ENCODE measurements at regions of chr6 and their contacts with region 1.

Region 1: GRCh38 chr6:42260972-42261371 is 43.3 kb upstream of the MRPS10 start:
- DNase-seq: peak in 1 of 2 experiments; percentile 86
- H3K4me3 ChIP-seq: no peak overlapping the region
- H3K27ac ChIP-seq: no peak overlapping the region
- H3K4me1 ChIP-seq: peaks cover 17 to 26% (median 20%) of the 10 kb centered on the region in 4 experiments
- H3K27me3 ChIP-seq: no peaks in the 10 kb centered on the region
- CTCF ChIP-seq: peak; percentile 51 to 79 (median 78)
- EP300 ChIP-seq: no peak
- POLR2A ChIP-seq: no peak
- RAD21 ChIP-seq: peak; percentile 66 to 69

Region 2: GRCh38 chr6:41941280-41942066 is 319.5 kb before region 1 on chr6 and contains the start of gene CCND3:
- CTCF ChIA-PET with region 1: no interaction called
- POLR2A ChIA-PET with region 1: no interaction called
- DNase-seq: peak in 1 of 2 experiments; percentile 83
- H3K4me3 ChIP-seq: peak within 1 kb of the TSS; percentile 69 to 91 (median 84)
- H3K27ac ChIP-seq: no peak within 1 kb of the TSS
- H3K4me1 ChIP-seq: peaks cover 6 to 28% (median 23%) of the 10 kb centered on the region in 4 experiments
- H3K27me3 ChIP-seq: no peaks in the 10 kb centered on the region
- CTCF ChIP-seq: no peak
- EP300 ChIP-seq: no peak
- POLR2A ChIP-seq: no peak
- RAD21 ChIP-seq: 0 out of 4 replicates have a peak, but pooled peaks of 1 of the 2 experiments have one; percentile 6
- total RNA-seq, gene CCND3: 28.4 and 32.9 TPM in 2 replicates

Region 3: DNA sequence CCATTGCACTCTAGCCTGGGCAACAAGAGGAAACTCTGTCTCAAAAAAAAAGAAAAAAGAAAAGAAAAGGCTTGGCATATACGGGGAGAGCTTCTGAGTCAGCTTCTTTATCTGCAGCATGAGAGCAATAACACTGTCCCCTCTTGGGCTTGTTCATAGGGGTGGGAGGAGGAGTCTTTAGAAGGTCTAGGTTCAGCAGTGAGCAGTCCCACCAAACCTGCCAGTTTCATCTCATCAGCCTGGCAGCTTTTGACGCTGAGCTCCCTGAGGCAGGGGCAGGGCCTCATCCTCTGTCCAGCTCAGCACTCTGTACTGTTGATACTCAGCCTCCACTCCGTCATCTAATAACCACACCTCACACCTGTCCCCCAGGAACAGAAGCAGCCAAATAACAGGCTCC is 112.9 kb before region 1 on chr6:
- CTCF ChIA-PET with region 1: no interaction called
- POLR2A ChIA-PET with region 1: no interaction called
- DNase-seq: no peak
- H3K4me3 ChIP-seq: no peak overlapping the region
- H3K27ac ChIP-seq: no peak overlapping the region
- H3K4me1 ChIP-seq: peaks cover 0 to 7% (median 3%) of the 10 kb centered on the region in 4 experiments; a peak in 4 of 7 replicates
- H3K27me3 ChIP-seq: no peaks in the 10 kb centered on the region
- CTCF ChIP-seq: no peak
- EP300 ChIP-seq: no peak
- POLR2A ChIP-seq: no peak
- RAD21 ChIP-seq: no peak

Region 4: DNA sequence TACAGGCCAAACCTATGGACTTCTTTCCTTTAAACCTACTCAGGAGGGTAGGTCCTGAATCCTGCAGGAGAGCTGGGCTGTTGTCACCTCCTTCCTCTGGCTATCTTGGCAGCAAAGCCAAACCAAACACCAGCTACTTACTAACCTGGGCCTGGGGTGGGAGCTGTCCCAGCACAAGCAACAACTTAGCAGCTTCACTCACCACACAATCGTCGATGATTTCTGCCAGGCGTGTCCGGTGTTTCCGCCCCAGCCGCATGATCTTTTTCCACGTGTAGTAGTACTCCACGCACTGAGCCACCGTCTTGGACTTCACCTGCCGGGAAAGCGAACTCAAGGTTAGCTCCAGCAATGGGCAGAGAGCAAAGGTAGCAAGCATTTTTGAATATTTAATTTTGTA is 17.9 kb before region 1 on chr6:
- CTCF ChIA-PET with region 1: interaction called, 11 read pairs
- POLR2A ChIA-PET with region 1: no interaction called
- DNase-seq: no peak
- H3K4me3 ChIP-seq: no peak overlapping the region
- H3K27ac ChIP-seq: no peak overlapping the region
- H3K4me1 ChIP-seq: peaks cover 0 to 9% (median 4%) of the 10 kb centered on the region in 4 experiments; a peak in 5 of 7 replicates
- H3K27me3 ChIP-seq: no peaks in the 10 kb centered on the region
- CTCF ChIP-seq: no peak
- EP300 ChIP-seq: no peak
- POLR2A ChIP-seq: no peak
- RAD21 ChIP-seq: no peak

Region 5: GRCh38 chr6:42279144-42279781 is 18.3 kb after region 1 on chr6:
- CTCF ChIA-PET with region 1: interaction called, 23 read pairs
- POLR2A ChIA-PET with region 1: interaction called, 4 read pairs
- DNase-seq: no peak
- H3K4me3 ChIP-seq: no peak overlapping the region
- H3K27ac ChIP-seq: no peak overlapping the region
- H3K4me1 ChIP-seq: peaks cover 0 to 11% (median 0%) of the 10 kb centered on the region in 4 experiments; a peak in 2 of 7 replicates
- H3K27me3 ChIP-seq: no peaks in the 10 kb centered on the region
- CTCF ChIP-seq: no peak
- EP300 ChIP-seq: no peak
- POLR2A ChIP-seq: no peak
- RAD21 ChIP-seq: no peak

Region 6: DNA sequence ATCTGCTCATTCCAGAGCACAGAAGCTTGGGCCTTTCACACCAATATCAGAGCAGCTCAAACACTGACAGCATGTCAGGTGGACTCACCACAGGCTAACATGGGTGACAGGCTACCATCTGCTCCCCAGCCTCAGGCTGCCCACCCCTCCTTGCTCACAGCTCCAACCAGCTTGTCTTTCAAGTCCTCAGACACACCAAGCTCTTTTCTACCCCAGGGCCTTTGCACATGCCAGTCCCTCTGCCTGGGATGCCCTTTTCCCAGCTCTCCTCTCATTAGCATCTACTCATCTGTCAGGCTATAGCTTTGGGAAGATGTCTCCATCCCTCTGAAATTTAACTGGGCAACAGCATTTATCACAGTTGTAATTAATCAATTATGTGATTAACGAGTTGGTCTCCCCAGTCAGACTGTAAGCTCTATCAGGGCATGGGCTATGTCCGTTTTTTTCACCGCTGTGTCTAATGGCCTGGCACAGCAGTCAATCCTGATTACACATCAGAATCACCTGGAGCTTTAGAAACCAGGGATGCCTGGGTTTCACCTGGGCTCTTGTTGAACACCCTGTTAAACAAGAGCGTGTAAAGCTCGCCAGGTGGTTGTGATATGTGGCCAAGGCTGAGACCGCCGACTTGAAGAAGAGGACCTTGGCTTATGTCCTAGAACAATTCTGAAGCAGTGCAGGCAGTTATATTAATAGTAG is 45.6 kb after region 1 on chr6:
- CTCF ChIA-PET with region 1: interaction called, 23 read pairs
- POLR2A ChIA-PET with region 1: no interaction called
- DNase-seq: no peak
- H3K4me3 ChIP-seq: no peak overlapping the region
- H3K27ac ChIP-seq: no peak overlapping the region
- H3K4me1 ChIP-seq: peaks cover 0 to 11% (median 5%) of the 10 kb centered on the region in 4 experiments; a peak in 4 of 7 replicates
- H3K27me3 ChIP-seq: no peaks in the 10 kb centered on the region
- CTCF ChIP-seq: no peak
- EP300 ChIP-seq: no peak
- POLR2A ChIP-seq: no peak
- RAD21 ChIP-seq: no peak

Region 7: DNA sequence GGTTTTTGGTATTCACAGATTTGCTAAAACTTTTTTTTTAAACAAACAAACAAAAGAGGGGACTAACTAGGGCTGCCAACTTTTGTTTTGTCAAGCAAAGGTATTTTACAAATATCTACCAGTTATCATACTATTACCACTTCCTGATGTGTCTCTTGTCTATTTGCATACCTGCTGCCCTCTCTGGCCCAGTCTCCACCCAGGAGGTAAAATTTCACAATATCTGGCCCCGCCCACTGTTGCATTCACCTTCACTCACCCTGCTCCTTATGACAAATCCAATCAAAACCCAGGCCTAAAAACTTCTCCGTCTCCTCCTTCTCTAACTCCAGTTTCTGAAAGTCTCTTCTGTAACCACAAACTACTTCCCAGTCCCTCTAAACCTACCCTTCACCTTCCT is 108.6 kb after region 1 on chr6:
- CTCF ChIA-PET with region 1: no interaction called
- POLR2A ChIA-PET with region 1: no interaction called
- DNase-seq: no peak
- H3K4me3 ChIP-seq: no peak overlapping the region
- H3K27ac ChIP-seq: no peak overlapping the region
- H3K4me1 ChIP-seq: peaks cover 0 to 3% (median 0%) of the 10 kb centered on the region in 4 experiments; a peak in 3 of 7 replicates
- H3K27me3 ChIP-seq: no peaks in the 10 kb centered on the region
- CTCF ChIP-seq: no peak
- EP300 ChIP-seq: no peak
- POLR2A ChIP-seq: no peak
- RAD21 ChIP-seq: no peak

Region 8: GRCh38 chr6:42453031-42453653 is 192.2 kb after region 1 on chr6:
- CTCF ChIA-PET with region 1: interaction called, 10 read pairs
- POLR2A ChIA-PET with region 1: interaction called, 4 read pairs
- DNase-seq: peak in 1 of 2 experiments; percentile 91
- H3K4me3 ChIP-seq: peak overlapping the region; percentile 73 to 96 (median 94)
- H3K27ac ChIP-seq: peak overlapping the region; percentile 89; the same call in 1 of the 2 replicates
- H3K4me1 ChIP-seq: peaks cover 0 to 26% (median 14%) of the 10 kb centered on the region in 4 experiments; a peak in 6 of 7 replicates
- H3K27me3 ChIP-seq: no peaks in the 10 kb centered on the region; a peak in 1 of 7 replicates
- CTCF ChIP-seq: no peak
- EP300 ChIP-seq: peak in 1 of 2 experiments; percentile 1; a peak in 1 of 3 replicates
- POLR2A ChIP-seq: peak in 1 of 2 experiments; percentile 30; a peak in 2 of 3 replicates
- RAD21 ChIP-seq: 0 out of 4 replicates have a peak, but pooled peaks of 1 of the 2 experiments have one; percentile 15

Region 9: DNA sequence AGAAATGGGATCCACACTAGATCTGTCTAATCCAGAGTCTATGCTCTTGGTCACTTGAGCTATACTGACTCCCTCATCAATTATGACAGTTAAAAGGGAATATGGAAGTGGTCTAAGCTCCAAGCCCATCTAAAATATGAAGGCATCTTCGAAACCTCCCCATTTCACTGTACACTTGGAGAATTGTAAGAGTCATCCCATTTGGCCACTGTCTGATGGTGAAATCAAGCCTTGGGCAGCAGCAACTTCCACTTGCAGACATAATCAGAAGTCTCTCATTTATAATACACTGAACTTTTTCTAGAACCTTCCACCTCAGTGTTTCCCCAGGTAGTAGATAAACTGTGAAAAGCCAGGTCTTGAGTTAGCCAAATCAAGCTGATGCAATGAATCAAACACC is 276.6 kb after region 1 on chr6:
- CTCF ChIA-PET with region 1: interaction called, 10 read pairs
- POLR2A ChIA-PET with region 1: no interaction called
- DNase-seq: no peak
- H3K4me3 ChIP-seq: no peak overlapping the region
- H3K27ac ChIP-seq: no peak overlapping the region
- H3K4me1 ChIP-seq: no peaks in the 10 kb centered on the region
- H3K27me3 ChIP-seq: no peaks in the 10 kb centered on the region
- CTCF ChIP-seq: no peak
- EP300 ChIP-seq: no peak
- POLR2A ChIP-seq: no peak
- RAD21 ChIP-seq: no peak

Region 10: DNA sequence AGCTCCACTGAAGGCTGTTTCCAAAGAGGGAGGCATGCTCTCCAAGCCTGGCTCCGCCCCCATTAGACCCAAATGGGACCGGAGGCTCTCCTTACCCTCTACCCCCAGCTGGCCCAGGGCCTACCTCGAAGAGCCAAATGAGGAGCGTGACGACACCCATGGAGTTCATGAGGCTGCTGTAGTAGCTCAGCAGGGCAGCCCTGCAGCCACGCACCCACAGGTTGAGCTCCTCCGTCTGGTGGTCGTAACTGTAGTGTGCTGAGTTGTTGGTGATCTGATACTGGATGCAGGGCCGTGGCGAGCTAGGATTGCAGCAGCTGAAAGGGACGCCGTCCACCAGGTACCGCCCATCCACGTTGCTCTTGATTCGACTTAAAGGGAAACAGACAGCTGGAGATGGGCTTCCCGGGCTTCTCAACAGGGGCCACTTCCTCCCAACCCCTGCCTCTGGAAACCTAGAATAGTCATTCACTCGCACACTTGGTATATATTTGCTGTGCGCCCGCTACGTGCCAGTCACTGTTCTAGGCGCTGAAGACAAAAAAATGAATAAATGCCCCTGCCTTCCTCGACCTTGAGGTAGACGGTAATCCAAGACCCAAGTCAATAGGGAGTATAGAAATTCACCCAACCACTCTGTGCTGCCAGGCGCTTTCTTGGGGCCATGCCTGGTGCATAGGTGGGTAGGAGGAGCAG is 443.4 kb after region 1 on chr6:
- CTCF ChIA-PET with region 1: no interaction called
- POLR2A ChIA-PET with region 1: no interaction called
- DNase-seq: peak in 1 of 2 experiments; percentile 57
- H3K4me3 ChIP-seq: peak overlapping the region in 2 of 4 experiments; percentile 2 to 43; a peak in 3 of 8 replicates
- H3K27ac ChIP-seq: no peak overlapping the region
- H3K4me1 ChIP-seq: peaks cover 0 to 6% (median 1%) of the 10 kb centered on the region in 4 experiments; a peak in 3 of 7 replicates
- H3K27me3 ChIP-seq: no peaks in the 10 kb centered on the region
- CTCF ChIP-seq: no peak
- EP300 ChIP-seq: no peak
- POLR2A ChIP-seq: peak in 1 of 2 experiments; percentile 63; a peak in 2 of 3 replicates
- RAD21 ChIP-seq: no peak